K562 (cell line): ENCODE measurements at regions of chr5 and their contacts with region 1.

Region 1: DNA sequence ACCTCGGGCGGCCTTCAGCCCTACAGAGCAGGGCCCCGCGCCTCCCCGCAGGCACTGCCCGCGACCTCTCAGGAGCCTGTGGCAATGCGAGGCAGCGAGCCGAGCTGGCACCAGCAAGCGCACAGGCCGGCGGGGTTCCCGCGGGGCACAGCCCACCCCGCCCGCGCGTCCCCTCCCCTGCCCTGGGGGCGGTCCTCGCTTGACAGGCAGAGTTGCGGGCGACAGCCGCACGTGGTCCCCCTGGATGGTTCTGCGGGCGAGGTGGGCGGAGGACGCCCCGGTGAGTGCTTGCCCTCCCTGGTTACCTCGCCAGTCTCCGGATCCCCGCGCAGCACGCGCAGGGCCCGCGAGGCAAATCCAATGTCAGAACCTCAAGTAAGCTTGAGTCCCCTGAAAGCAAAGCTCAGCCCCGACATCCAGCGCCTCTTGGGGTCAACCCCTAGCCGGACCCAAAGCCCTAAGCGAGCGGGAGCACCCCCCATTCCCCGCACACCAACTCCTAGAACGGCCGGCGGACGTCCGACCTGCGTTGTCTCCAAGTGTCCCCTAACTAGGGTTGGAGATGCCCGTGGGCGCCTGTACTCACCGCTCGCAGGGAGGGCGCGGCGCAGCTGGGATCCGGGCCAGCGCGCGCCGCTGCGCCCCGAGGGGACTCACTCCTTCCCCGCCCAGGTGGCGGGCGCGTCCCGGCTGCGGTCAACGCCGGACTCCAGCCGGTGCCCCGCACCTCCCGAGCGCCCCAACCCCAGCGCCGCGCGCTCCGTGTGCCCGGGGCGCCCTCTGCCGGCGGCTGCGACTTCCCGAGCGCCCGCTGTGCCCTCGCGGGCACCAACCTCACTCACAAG is at the start of gene DRD1:
- DNase-seq: peak; percentile 31 to 62 (median 60)
- ATAC-seq: peak; percentile 94
- H3K4me3 ChIP-seq: no peak within 1 kb of the TSS
- H3K27ac ChIP-seq: no peak within 1 kb of the TSS
- H3K4me1 ChIP-seq: peaks cover 0 to 10% of the 10 kb centered on the region in 2 experiments; a peak in 1 of 5 replicates
- H3K27me3 ChIP-seq: peaks cover 32 to 54% of the 10 kb centered on the region in 2 experiments
- CTCF ChIP-seq: peak; percentile 59 to 76 (median 60)
- EP300 ChIP-seq: no peak
- POLR2A ChIP-seq: no peak
- RAD21 ChIP-seq: peak; percentile 66 to 71
- polyA plus RNA-seq, gene DRD1: not detected

Region 2: DNA sequence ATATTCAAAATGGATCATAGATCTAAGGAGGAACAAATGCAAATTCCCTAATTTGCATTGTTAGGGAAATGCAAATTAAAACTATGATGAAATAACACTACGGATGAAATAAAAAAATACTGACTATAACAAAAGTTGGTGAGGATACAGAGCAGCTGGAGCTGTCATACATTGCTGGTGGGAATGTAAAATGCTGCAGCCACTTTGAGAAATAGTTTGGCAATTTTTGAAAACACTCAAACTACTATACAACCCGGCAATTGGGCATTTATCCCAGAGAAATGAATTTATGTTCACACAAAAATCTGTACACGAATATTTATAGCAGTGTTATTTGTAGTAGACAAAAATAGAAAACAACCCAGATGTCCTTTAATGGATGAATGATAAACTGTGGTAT is 1432.8 kb before region 1 on chr5:
- CTCF ChIA-PET with region 1: no interaction called
- POLR2A ChIA-PET with region 1: no interaction called
- in situ Hi-C with region 1: loop called (anchors 10 kb)
- intact Hi-C with region 1: no loop called
- DNase-seq: no peak
- ATAC-seq: no peak
- H3K4me3 ChIP-seq: no peak overlapping the region
- H3K27ac ChIP-seq: no peak overlapping the region
- H3K4me1 ChIP-seq: no peaks in the 10 kb centered on the region
- H3K27me3 ChIP-seq: no peaks in the 10 kb centered on the region
- CTCF ChIP-seq: no peak
- EP300 ChIP-seq: no peak
- POLR2A ChIP-seq: no peak
- RAD21 ChIP-seq: no peak

Region 3: DNA sequence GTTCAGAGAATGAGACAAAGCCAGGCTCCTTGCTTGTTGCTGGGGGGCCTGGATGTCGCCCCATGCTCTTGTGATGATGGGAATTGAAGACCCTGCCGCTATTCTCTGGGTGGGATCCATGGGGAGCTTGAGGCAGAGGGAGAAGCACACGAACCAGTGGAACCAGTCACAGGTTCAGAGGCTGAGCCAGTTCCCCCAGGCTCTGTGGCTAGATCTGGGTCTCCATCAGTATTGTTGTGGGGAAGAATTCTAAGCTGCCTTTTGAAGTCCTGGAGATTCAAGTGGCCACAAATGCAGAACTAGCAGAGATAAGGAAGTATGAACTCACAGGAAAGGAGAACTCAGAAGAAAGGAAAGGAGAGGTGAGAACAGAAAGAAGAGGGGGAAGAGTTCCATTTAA is 500.5 kb before region 1 on chr5:
- CTCF ChIA-PET with region 1: no interaction called
- POLR2A ChIA-PET with region 1: no interaction called
- in situ Hi-C with region 1: loop called (anchors 5 kb)
- intact Hi-C with region 1: no loop called
- DNase-seq: no peak
- ATAC-seq: no peak
- H3K4me3 ChIP-seq: no peak overlapping the region
- H3K27ac ChIP-seq: no peak overlapping the region
- H3K4me1 ChIP-seq: no peaks in the 10 kb centered on the region
- H3K27me3 ChIP-seq: peaks cover 0 to 6% of the 10 kb centered on the region in 2 experiments; a peak in 2 of 5 replicates
- CTCF ChIP-seq: no peak
- EP300 ChIP-seq: no peak
- POLR2A ChIP-seq: no peak
- RAD21 ChIP-seq: no peak

Region 4: GRCh38 chr5:174951146-174951780 is 493.0 kb before region 1 on chr5:
- CTCF ChIA-PET with region 1: interaction called, 5 read pairs
- POLR2A ChIA-PET with region 1: no interaction called
- in situ Hi-C with region 1: no loop called
- intact Hi-C with region 1: loop called (anchors 2 kb)
- DNase-seq: peak; percentile 63 to 73 (median 68)
- ATAC-seq: peak; percentile 94
- H3K4me3 ChIP-seq: no peak overlapping the region
- H3K27ac ChIP-seq: no peak overlapping the region
- H3K4me1 ChIP-seq: no peaks in the 10 kb centered on the region
- H3K27me3 ChIP-seq: no peaks in the 10 kb centered on the region; a peak in 1 of 5 replicates
- CTCF ChIP-seq: peak; percentile 76 to 83 (median 83)
- EP300 ChIP-seq: no peak
- POLR2A ChIP-seq: no peak
- RAD21 ChIP-seq: peak; percentile 87 to 89

Region 5: GRCh38 chr5:175475248-175475647 is 31.0 kb after region 1 on chr5:
- CTCF ChIA-PET with region 1: no interaction called
- POLR2A ChIA-PET with region 1: no interaction called
- in situ Hi-C with region 1: no loop called
- intact Hi-C with region 1: no loop called
- DNase-seq: no peak
- ATAC-seq: no peak
- H3K4me3 ChIP-seq: no peak overlapping the region
- H3K27ac ChIP-seq: no peak overlapping the region
- H3K4me1 ChIP-seq: peaks cover under 1 to 17% of the 10 kb centered on the region in 2 experiments; a peak in 2 of 5 replicates
- H3K27me3 ChIP-seq: peaks cover 24 to 44% of the 10 kb centered on the region in 2 experiments
- CTCF ChIP-seq: no peak
- EP300 ChIP-seq: no peak
- POLR2A ChIP-seq: no peak
- RAD21 ChIP-seq: no peak

Region 6: DNA sequence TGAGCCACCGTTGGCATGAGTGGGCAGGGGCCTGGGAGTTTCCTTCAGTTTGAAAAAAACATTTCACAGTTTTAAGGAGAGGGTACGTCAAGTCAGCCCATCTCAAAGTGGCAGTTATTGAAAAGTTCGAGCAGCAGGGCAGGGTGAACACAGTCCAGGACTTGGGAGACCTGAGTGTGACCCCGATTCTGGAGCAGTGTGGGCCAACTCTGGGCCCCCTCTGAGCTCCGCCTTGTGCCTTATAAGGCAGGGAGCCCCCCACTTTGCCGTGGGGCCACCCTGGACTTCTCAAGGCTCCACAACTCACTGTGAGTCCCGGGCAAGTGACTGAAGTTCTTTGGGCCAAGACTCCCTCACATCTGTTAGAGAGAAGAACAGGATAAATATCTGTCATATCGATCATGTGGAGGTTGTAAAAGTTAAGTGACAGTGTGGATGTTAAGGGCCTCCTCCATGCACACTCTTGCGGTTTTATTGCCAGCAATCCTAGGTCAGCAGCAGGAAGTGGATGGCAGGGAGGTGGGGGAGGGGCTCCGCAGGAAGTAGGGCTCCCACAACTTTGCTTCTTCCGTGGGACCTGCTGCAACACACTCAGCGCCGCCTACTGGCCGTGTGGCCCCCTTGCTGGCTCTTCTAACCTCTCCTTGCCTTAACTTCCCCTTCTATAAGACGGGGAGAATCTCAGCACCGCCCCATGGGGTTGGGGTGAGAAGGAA is 252.0 kb after region 1 on chr5:
- CTCF ChIA-PET with region 1: no interaction called
- POLR2A ChIA-PET with region 1: no interaction called
- in situ Hi-C with region 1: no loop called
- intact Hi-C with region 1: no loop called
- DNase-seq: peak; percentile 64 to 84 (median 73)
- ATAC-seq: peak; percentile 87
- H3K4me3 ChIP-seq: no peak overlapping the region
- H3K27ac ChIP-seq: no peak overlapping the region
- H3K4me1 ChIP-seq: peaks cover 4 to 5% of the 10 kb centered on the region in 2 experiments; a peak in 3 of 5 replicates
- H3K27me3 ChIP-seq: peaks cover 18 to 47% of the 10 kb centered on the region in 2 experiments; a peak in 4 of 5 replicates
- CTCF ChIP-seq: peak; percentile 72 to 80 (median 77)
- EP300 ChIP-seq: no peak
- POLR2A ChIP-seq: no peak
- RAD21 ChIP-seq: peak; percentile 30 to 68

Region 7: DNA sequence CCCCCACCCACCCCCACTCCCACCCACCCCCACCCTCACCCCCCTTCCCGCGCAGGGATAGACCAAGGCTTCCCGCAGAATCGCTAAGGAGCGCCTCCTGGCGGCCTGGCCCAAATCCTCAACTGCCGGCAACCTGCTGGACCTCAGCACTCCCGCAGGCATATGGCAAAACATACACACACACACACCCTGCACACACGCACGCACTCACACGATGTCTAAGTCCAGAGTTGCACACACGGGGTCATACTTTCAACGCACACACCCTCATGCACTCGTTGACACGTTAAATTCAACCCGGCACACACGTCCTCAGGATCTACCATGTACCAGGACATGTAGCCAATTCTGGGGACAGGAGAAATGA is 428.8 kb after region 1 on chr5:
- CTCF ChIA-PET with region 1: no interaction called
- POLR2A ChIA-PET with region 1: no interaction called
- in situ Hi-C with region 1: no loop called
- intact Hi-C with region 1: no loop called
- DNase-seq: peak; percentile 30 to 54 (median 44)
- ATAC-seq: peak; percentile 73
- H3K4me3 ChIP-seq: no peak overlapping the region
- H3K27ac ChIP-seq: no peak overlapping the region
- H3K4me1 ChIP-seq: peaks cover 0 to 14% of the 10 kb centered on the region in 2 experiments; a peak in 2 of 5 replicates
- H3K27me3 ChIP-seq: peaks cover 0 to 2% of the 10 kb centered on the region in 2 experiments; a peak in 1 of 5 replicates
- CTCF ChIP-seq: peak; percentile 38 to 59 (median 46)
- EP300 ChIP-seq: no peak
- POLR2A ChIP-seq: no peak
- RAD21 ChIP-seq: 0 out of 4 replicates have a peak, but pooled peaks of 1 of the 2 experiments have one; percentile 14